SK-N-SH (cell line): ENCODE measurements at regions of chr1 and their contacts with region 1.

Region 1: DNA sequence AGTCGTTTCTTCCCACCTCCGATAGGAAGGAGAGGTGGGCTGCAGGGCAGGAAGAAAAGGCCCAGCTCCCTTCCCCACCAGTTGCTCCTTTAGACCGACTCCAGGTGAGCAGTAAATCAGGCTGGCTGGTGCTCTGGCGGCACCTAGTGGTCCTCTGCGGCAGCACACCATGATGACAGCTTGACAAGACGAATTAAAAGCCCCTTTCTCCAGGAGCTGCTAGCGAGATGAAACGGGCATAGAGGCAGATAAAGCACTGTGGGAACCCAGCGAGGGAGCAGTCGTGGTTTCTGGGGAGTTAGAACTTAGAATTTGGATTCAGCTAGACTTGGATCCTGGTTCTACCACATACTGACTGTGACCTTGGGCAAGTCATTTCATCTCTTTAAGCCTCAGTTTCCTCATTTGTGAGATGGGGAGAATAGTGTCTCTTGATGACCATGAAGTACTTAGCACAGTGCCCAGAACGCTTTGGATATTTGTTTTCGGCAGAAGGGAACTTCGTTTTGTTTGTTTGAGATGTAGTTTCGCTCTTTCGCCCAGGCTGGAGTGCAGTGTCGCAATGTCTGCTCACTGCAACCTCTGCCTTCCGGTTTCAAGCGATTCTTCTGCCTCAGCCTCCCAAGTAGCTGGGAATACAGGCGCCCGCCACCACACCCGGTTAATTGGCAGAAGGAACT is 21.8 kb upstream of the COL9A2 start:
- DNase-seq: peak; percentile 78
- H3K4me3 ChIP-seq: peak overlapping the region in 1 of 2 experiments; percentile 38; a peak in 1 of 4 replicates
- H3K27ac ChIP-seq: no peak overlapping the region
- H3K4me1 ChIP-seq: no peaks in the 10 kb centered on the region; a peak in 1 of 4 replicates
- H3K27me3 ChIP-seq: no peaks in the 10 kb centered on the region; the same call in 1 of the 2 replicates
- CTCF ChIP-seq: peak; percentile 99
- EP300 ChIP-seq: no peak
- RAD21 ChIP-seq: peak; percentile 99

Region 2: DNA sequence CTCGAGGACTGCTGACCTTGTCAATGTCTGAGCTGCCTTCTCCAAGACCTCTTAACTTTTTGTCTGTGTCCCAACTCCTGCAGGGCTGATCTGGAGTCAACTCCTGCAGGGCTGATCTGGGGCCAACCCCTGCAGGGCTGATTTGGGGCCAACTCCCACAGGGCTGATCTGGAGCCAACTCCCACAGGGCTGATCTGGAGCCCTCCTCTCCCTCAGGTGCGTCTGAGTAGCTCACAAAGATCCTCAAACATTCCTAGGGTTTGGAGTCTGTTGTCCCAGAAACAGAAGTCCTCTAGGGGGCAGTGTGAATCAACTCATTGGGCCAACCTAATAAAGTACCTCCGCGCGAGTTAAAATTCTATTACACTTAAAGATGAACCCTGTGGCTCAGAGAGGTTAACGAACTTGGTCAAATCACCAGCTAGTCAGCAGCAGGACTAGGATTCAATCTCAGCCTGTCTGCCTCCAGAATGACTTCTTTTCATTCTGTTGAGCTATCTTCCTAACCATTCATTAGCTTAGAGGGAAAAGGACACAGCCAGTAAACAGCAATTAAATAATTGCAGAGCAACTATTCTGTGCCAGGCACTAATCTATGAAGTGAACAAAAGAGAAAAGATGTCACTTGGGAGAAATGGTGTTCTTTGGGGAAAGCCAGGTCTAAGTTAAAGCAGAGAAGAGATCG is 194.9 kb before region 1 on chr1:
- CTCF ChIA-PET with region 1: interaction called, 280 read pairs
- POLR2A ChIA-PET with region 1: interaction called, 3 read pairs
- DNase-seq: peak; percentile 60
- H3K4me3 ChIP-seq: no peak overlapping the region; a peak in 2 of 4 replicates
- H3K27ac ChIP-seq: no peak overlapping the region
- H3K4me1 ChIP-seq: peaks cover 0 to 8% of the 10 kb centered on the region in 2 experiments; a peak in 1 of 4 replicates
- H3K27me3 ChIP-seq: no peaks in the 10 kb centered on the region; the same call in 1 of the 2 replicates
- CTCF ChIP-seq: peak; percentile 81
- EP300 ChIP-seq: no peak
- RAD21 ChIP-seq: peak; percentile 88

Region 3: DNA sequence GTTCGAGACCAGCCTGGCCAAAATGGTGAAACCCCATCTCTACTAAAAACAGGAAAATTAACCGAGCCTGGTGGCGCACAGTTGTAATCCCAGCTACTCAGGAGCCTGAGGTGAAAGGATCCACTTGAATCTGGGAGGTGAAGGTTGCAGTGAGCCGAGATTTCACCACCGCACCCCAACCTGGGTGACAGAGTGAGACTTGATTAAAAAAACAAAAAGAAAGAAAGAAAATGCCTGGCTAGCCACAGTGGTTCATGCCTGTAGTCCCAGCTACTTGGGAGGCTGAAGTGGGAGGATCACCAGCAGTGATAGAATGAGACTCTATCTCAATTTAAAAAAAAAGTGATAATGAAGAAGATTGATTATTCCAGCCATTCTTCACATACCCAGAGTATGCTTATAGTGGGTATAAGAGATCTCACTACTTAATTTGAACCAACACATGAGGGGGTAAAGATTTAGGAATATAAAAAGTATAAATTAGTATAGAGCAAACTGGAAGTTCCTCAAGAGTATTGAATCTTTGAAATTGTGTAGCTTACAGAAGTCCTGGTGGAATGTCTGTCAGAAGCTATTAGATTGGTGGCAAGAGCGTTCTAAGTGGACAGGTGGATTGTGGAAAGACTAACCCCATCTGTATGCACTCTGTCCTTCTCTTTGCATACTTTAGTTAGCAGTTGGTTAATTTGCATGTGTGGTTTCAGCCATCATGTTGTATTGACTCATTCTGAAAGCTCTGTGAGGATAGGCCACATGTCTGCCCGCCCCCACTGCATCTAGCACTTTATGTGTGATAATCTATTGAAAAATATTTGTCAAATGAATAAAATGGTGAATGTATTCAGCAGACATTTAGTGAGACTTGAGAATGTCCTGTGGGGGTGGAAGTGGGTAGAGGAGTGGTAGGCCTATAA is 152.7 kb before region 1 on chr1:
- CTCF ChIA-PET with region 1: interaction called, 12 read pairs
- POLR2A ChIA-PET with region 1: no interaction called
- DNase-seq: no peak
- H3K4me3 ChIP-seq: no peak overlapping the region
- H3K27ac ChIP-seq: peak overlapping the region in 1 of 2 experiments; percentile 11; a peak in 1 of 4 replicates
- H3K4me1 ChIP-seq: peaks cover 0 to 24% of the 10 kb centered on the region in 2 experiments; a peak in 1 of 4 replicates
- H3K27me3 ChIP-seq: no peaks in the 10 kb centered on the region
- CTCF ChIP-seq: no peak
- EP300 ChIP-seq: no peak
- RAD21 ChIP-seq: no peak

Region 4: GRCh38 chr1:40352126-40352525 is 13.2 kb after region 1 on chr1:
- CTCF ChIA-PET with region 1: interaction called, 71 read pairs
- POLR2A ChIA-PET with region 1: no interaction called
- DNase-seq: no peak
- H3K4me3 ChIP-seq: no peak overlapping the region
- H3K27ac ChIP-seq: no peak overlapping the region
- H3K4me1 ChIP-seq: no peaks in the 10 kb centered on the region
- H3K27me3 ChIP-seq: no peaks in the 10 kb centered on the region
- CTCF ChIP-seq: no peak
- EP300 ChIP-seq: no peak
- RAD21 ChIP-seq: no peak

Region 5: GRCh38 chr1:40392221-40392620 is 53.3 kb after region 1 on chr1:
- CTCF ChIA-PET with region 1: interaction called, 25 read pairs
- POLR2A ChIA-PET with region 1: no interaction called
- DNase-seq: no peak
- H3K4me3 ChIP-seq: no peak overlapping the region
- H3K27ac ChIP-seq: peak overlapping the region in 1 of 2 experiments; percentile 52; a peak in 1 of 4 replicates
- H3K4me1 ChIP-seq: peaks cover 0 to 15% of the 10 kb centered on the region in 2 experiments; a peak in 1 of 4 replicates
- H3K27me3 ChIP-seq: no peaks in the 10 kb centered on the region
- CTCF ChIP-seq: no peak
- EP300 ChIP-seq: no peak
- RAD21 ChIP-seq: no peak

Region 6: GRCh38 chr1:41175546-41175945 is 836.7 kb after region 1 on chr1:
- CTCF ChIA-PET with region 1: no interaction called
- POLR2A ChIA-PET with region 1: no interaction called
- DNase-seq: no peak
- H3K4me3 ChIP-seq: no peak overlapping the region
- H3K27ac ChIP-seq: no peak overlapping the region
- H3K4me1 ChIP-seq: no peaks in the 10 kb centered on the region
- H3K27me3 ChIP-seq: no peaks in the 10 kb centered on the region
- CTCF ChIP-seq: no peak
- EP300 ChIP-seq: no peak
- RAD21 ChIP-seq: no peak